ENCODE measurements at regions of chr6 and their contacts with region 1.

Region 1: DNA sequence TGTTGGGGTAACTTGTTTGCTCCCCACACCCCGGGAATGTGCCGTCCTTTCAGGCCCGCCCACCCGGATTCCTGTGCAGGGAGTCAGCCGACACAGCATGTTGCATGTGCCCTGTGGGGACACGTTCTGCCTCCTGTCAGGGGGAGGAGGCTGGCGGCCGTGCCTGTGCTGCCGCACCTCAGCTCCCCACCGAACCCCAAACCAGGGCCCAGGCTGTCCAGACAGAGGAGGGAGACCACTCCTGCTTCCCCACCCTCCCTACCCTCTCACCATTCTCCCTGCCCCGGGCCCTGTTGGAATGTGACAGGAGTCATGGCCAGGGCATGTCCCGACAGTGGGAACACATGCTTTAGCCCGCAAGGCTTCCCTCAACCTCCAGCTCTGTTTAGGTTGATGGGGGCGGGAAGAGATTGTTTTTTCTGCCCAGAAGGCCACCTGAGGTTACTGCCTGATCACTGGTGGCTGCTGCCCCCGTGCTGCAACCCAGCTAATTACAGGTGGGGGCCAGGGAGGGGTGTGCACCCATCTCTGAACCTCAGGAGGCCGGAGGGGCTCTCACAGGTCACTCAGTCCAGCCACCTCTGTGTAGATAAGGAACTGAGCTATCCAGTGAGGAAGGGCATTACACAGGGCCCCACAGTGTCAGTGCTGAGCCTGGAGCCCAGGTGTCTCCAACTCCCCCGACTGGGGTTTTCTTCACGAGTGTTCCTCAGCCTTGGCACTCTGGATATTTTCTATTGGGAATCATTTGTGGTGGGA is 13.6 kb downstream of the LRRC73 start:
- DNase-seq: peak; percentile 54
- ATAC-seq: peak; percentile 40

Region 2: GRCh38 chr6:43386492-43386891 is 110.1 kb before region 1 on chr6:
- intact Hi-C with region 1: loop called (anchors 10 kb)
- DNase-seq: no peak
- ATAC-seq: no peak

Region 3: DNA sequence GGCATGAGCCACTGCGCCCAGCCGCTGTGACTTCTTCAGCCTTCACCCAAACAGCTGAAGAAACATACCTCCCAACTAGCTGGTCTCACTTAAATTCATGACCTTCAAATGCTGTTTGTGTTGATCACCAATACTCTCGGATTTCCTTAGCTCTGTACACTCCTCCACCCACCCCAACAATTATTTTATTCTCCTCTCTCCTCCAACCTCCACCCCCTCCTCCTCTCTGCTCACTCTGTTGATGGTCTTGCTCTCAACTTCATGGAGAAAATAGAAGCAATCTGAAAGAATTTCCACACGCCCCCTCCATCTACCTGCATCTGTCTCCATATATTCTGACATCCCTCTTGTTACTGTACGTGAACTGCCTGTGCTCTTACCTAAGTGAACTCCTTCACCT is 34.6 kb before region 1 on chr6:
- intact Hi-C with region 1: loop called (anchors 5 kb)
- DNase-seq: no peak
- ATAC-seq: no peak

Measured in left ventricle myocardium superior (tissue), 1 donor.